Transverse colon (tissue), 4 donors: ENCODE measurements at regions of chr12 and their contacts with region 1.

Region 1: GRCh38 chr12:11648831-11649702 is at the start of gene ETV6:
- DNase-seq: peak; percentile 81
- H3K4me3 ChIP-seq: peak within 1 kb of the TSS; percentile 77 to 97 (median 84)
- H3K27ac ChIP-seq: peak within 1 kb of the TSS; percentile 96 to 99 (median 98)
- H3K4me1 ChIP-seq: peaks cover 4 to 32% (median 17%) of the 10 kb centered on the region in 4 donors
- H3K27me3 ChIP-seq: no peaks in the 10 kb centered on the region
- CTCF ChIP-seq: no peak
- EP300 ChIP-seq: peak; percentile 89
- POLR2A ChIP-seq: peak; percentile 64
- total RNA-seq, gene ETV6: 19.9 to 47.9 (median 41.0) TPM

Region 2: GRCh38 chr12:11705010-11705409 is 55.9 kb after region 1 on chr12:
- in situ Hi-C with region 1: no loop called
- intact Hi-C with region 1: loop called (anchors 10 kb)
- DNase-seq: no peak
- H3K4me3 ChIP-seq: no peak overlapping the region
- H3K27ac ChIP-seq: peak overlapping the region; percentile 64 to 81 (median 70)
- H3K4me1 ChIP-seq: peaks cover 22 to 58% (median 38%) of the 10 kb centered on the region in 4 donors
- H3K27me3 ChIP-seq: no peaks in the 10 kb centered on the region
- CTCF ChIP-seq: no peak
- EP300 ChIP-seq: peak; percentile 53
- POLR2A ChIP-seq: no peak

Region 3: DNA sequence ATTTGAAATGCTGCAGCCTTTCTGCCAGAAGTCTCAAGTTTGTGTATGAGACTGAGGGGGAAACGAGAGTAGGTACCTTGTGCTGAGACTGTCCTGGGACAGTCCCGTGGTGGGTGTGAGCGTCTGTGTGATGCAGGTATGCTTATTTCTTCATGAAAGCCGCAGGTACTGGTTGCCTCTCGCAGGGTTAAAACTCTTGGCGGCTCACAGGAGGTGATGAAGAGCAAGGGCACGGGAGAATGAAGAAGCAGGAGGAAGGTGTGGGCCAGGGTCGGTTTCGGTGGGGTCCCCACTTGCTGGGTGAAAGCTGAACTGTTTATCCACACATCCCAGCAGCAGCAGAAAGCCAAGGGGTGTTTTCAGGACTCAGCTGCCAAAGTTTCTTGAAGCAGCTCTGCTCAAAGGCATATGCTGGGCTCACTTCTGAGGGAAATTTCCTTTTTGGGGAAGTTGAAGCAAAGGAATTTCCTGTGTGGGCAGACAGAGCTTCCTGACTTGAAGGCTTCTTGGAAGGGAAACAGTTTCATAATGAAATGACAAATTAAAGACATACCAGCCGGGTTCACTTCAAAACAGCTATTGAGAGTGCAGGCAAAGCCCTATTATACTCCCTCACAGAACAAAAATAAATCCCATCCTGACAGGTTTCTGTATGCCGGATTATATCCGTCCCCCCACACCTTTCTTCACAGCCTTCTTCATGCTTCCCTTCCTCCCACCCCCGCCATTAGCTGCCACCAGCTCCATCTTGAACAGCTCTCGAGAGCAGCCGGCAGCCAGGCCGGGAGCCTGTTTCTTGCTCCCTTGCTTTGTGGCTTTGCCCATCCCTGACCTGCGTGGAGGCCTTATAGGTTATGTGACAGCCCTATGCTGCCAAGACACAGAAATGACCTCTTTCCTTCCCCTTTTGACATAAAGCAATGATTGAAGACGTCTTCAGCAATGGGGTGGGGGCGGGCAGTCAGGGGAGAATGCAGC is 117.0 kb after region 1 on chr12:
- in situ Hi-C with region 1: no loop called
- intact Hi-C with region 1: no loop called
- DNase-seq: peak; percentile 56
- H3K4me3 ChIP-seq: no peak overlapping the region
- H3K27ac ChIP-seq: peak overlapping the region; percentile 80 to 83 (median 80)
- H3K4me1 ChIP-seq: peaks cover 48 to 92% (median 75%) of the 10 kb centered on the region in 4 donors
- H3K27me3 ChIP-seq: no peaks in the 10 kb centered on the region
- CTCF ChIP-seq: no peak
- EP300 ChIP-seq: no peak
- POLR2A ChIP-seq: peak; percentile 11

Region 4: GRCh38 chr12:11855983-11856374 is 206.9 kb after region 1 on chr12:
- in situ Hi-C with region 1: no loop called
- intact Hi-C with region 1: loop called (anchors 10 kb)
- DNase-seq: no peak
- H3K4me3 ChIP-seq: no peak overlapping the region
- H3K27ac ChIP-seq: peak overlapping the region; percentile 46 to 62 (median 60)
- H3K4me1 ChIP-seq: peaks cover 3 to 47% (median 22%) of the 10 kb centered on the region in 4 donors
- H3K27me3 ChIP-seq: no peaks in the 10 kb centered on the region
- CTCF ChIP-seq: no peak
- EP300 ChIP-seq: no peak
- POLR2A ChIP-seq: no peak

Region 5: DNA sequence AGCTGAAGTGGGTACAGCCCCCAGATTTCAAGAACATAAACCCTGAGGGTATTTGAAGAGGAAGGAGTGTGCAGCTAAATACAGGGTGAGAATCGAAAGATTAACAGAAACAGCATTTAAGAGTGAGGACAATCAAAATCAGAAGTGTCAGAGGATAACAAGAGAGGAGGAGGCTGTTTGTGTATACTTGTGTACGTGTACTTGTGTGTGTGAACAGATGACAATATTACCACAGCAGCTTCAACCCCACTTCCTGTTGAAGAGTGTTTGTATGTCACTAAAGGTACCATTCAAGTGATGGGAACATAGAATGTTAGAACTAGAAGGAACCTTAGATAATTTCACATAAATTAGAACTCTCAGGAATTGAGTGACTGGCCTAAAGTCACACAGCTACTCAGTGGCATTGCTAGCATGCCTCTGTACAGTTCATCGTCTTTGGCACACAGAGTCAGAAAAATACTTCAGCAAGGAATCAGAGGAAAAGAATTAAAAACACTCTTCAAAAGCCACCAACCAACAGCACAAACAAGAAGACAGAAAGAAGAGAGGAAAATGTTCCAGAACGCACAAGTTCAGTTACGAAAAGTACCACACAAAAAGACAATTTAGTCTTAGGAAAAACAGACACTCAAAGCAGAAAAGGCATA is 257.3 kb after region 1 on chr12:
- in situ Hi-C with region 1: no loop called
- intact Hi-C with region 1: no loop called
- DNase-seq: no peak
- H3K4me3 ChIP-seq: no peak overlapping the region
- H3K27ac ChIP-seq: no peak overlapping the region
- H3K4me1 ChIP-seq: no peaks in the 10 kb centered on the region
- H3K27me3 ChIP-seq: no peaks in the 10 kb centered on the region
- CTCF ChIP-seq: no peak
- EP300 ChIP-seq: no peak
- POLR2A ChIP-seq: no peak

Region 6: DNA sequence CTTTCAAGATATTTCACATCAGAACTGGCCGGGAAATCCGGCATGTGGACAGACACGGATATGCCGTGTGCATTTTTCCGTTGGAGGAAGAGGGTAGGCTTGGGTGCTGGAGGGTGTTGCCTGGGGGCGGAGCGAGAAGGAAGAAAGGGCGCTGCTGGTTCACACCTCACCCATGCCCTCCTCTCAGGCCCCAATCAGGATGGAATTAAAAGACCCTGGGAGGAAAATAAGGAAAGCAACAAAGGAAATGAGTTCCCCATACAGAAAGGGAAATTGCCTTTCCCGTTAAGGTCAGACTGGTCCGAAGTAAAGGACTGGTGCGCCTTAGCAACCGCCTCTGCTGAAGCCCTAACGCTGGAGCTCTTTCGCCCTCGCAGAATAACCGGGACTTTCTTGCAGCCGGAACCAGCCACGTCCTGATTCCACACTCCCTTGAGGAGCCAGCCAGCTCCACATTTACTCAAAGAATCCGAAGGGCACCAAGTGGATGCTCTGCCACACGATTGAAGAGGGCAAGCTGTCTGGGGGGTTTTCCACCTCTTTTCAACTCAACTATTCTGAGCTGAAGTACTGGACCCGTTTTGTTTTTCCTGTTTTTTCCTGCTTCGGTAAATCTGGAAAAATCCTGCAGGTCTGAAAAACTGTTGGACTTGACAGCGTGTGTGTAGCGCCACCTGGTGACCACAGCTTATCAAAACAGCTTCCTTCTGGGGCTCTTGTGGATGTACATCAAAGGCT is 384.0 kb after region 1 on chr12:
- in situ Hi-C with region 1: loop called in 1 of 4 experiments (anchors 10 kb)
- intact Hi-C with region 1: no loop called
- DNase-seq: peak; percentile 87
- H3K4me3 ChIP-seq: peak overlapping the region in 3 of 4 donors; percentile 31 to 56 (median 33)
- H3K27ac ChIP-seq: peak overlapping the region; percentile 85 to 86 (median 86)
- H3K4me1 ChIP-seq: peaks cover 0 to 20% (median 13%) of the 10 kb centered on the region in 4 donors
- H3K27me3 ChIP-seq: no peaks in the 10 kb centered on the region
- CTCF ChIP-seq: peak; percentile 78 to 96 (median 82)
- EP300 ChIP-seq: no peak
- POLR2A ChIP-seq: no peak